ENCODE measurements at regions of chr2 and their contacts with region 1.

Region 1: DNA sequence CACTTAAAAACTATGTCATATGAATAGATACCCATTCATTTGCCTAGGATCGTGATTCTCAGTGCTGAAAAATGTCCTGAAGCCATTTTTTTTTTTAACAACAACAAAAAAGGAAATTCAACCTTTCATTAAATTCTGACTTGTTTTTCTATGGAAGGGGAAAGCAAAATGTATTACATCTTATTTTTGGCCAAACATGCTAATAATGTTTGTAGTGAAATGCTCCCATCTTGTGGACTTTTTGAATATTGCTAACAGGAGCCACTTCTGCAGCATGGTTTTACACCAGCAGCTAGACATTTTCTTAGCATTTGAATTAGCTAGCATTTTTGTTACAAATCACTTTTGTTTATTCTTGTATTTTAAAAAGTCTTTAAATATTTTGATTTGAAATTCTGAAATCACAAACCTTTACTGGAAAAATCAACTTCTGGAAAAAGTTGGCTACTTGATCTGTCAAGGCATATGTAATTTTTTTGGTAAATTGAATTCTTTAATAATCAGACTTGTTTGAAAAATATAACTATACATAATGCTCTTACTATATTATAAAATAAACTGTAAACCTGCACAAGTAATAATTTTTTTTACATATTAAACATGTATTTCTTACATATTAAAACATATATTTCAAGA is 75.8 kb downstream of the KIDINS220 start:
- DNase-seq: peak; percentile 39 to 55 (median 49)
- ATAC-seq: peak; percentile 64
- H3K4me3 ChIP-seq: no peak overlapping the region
- H3K27ac ChIP-seq: no peak overlapping the region
- H3K4me1 ChIP-seq: no peaks in the 10 kb centered on the region
- H3K27me3 ChIP-seq: no peaks in the 10 kb centered on the region
- CTCF ChIP-seq: peak; percentile 28 to 69 (median 58); a peak in 5 of 6 replicates
- EP300 ChIP-seq: no peak
- POLR2A ChIP-seq: no peak
- RAD21 ChIP-seq: peak; percentile 63 to 71

Region 2: DNA sequence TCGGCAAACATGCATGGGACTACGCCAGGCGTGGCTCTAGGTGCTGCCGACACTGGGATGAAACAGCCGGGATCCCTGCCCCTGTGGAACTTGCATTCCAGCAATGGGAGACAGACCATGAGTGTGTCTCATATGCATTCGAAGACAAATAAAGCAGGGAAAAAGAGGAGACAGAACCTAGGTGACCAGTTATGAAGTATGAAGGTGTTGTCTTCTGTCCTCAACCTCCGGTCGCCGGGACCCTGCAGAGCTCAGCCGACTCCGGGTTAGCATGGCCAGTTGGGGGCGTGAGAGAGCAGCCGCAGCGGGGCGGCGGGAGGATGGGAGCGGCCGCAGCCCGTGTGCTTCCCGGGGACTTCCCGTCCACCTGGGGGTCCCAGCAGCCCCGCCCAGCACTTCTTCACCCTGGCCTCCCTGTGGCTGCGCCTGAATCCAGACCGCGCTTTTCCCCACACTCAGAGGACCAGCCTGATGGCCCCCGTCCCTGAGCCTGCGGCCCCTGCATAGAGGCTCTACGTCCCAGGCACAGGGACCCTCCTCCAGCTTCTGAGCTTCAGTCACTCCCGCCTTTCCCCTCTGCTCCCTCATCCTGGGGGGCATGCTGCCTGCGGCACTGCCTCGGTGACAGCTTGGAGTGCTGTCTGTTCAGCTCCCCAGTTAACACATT is 68.4 kb before region 1 on chr2:
- CTCF ChIA-PET with region 1: interaction called, 13 read pairs
- POLR2A ChIA-PET with region 1: no interaction called
- in situ Hi-C with region 1: no loop called
- intact Hi-C with region 1: loop called (anchors 1 kb)
- DNase-seq: peak; percentile 58 to 77 (median 73)
- ATAC-seq: peak; percentile 92
- H3K4me3 ChIP-seq: no peak overlapping the region
- H3K27ac ChIP-seq: no peak overlapping the region
- H3K4me1 ChIP-seq: peaks cover 10 to 17% of the 10 kb centered on the region in 2 experiments; a peak in 4 of 5 replicates
- H3K27me3 ChIP-seq: no peaks in the 10 kb centered on the region
- CTCF ChIP-seq: peak; percentile 76 to 89 (median 87)
- EP300 ChIP-seq: no peak
- POLR2A ChIP-seq: no peak
- RAD21 ChIP-seq: peak; percentile 41 to 75; a peak in 3 of 4 replicates

Measured in K562 (cell line).